ENCODE measurements at regions of chr3 and their contacts with region 1.

Region 1: DNA sequence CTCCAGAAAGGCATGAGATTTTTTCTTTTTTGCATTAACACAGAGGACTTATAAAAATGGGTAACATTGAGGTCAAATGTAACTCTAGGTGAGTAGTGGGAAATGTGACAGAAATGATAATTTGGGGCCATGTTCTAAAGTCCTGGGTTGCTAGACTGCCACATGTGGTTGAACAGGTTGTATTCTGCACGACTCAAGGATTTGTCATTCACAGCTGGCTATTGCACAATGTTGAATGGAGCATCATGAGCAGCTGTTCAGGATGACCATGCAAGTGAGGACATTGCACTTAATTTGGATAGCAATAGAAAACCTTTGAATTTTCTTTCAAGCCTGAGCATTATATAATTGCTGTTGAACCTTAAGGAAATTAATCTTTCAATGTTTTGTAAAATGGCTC is 396.6 kb downstream of the NAALADL2 start:
- DNase-seq: peak; percentile 92
- ATAC-seq: no peak; the same call in 1 of the 2 replicates
- H3K4me3 ChIP-seq: no peak overlapping the region
- H3K27ac ChIP-seq: no peak overlapping the region
- H3K4me1 ChIP-seq: 0 out of 2 replicates have a peak, but pooled peaks cover 2% of the 10 kb centered on the region
- H3K27me3 ChIP-seq: no peaks in the 10 kb centered on the region
- CTCF ChIP-seq: no peak
- POLR2A ChIP-seq: no peak
- RAD21 ChIP-seq: no peak

Region 2: DNA sequence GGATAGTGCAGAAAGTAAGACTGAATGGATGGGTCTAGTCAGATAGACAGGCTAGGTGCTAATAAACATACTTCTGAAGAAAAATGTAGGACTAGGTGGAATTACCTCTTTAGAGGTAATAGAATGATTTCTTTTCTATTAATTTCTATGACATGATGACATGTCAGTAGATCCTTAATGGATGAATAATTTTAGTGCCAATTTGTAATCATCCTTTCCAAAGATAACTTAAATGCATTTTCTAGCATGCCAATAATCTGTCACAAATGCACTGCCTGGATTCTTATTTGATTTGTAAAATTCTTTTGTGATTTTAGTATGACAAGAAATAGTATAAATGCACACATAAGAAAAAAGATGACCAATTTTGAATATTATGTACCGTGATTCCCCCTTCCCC is 39.9 kb before region 1 on chr3:
- CTCF ChIA-PET with region 1: no interaction called
- POLR2A ChIA-PET with region 1: no interaction called
- dilution Hi-C with region 1: no loop called
- in situ Hi-C with region 1: no loop called
- intact Hi-C with region 1: loop called (anchors 5 kb)
- DNase-seq: no peak
- ATAC-seq: no peak
- H3K4me3 ChIP-seq: no peak overlapping the region
- H3K27ac ChIP-seq: no peak overlapping the region
- H3K4me1 ChIP-seq: no peaks in the 10 kb centered on the region
- H3K27me3 ChIP-seq: no peaks in the 10 kb centered on the region
- CTCF ChIP-seq: no peak
- POLR2A ChIP-seq: no peak
- RAD21 ChIP-seq: no peak

Measured in IMR-90 (cell line).